Caco-2 (cell line): ENCODE measurements at regions of chr5 and their contacts with region 1.

Region 1: GRCh38 chr5:128905571-128906110 is 59.6 kb upstream of the SLC27A6 start:
- DNase-seq: peak in 1 of 2 experiments; percentile 62
- H3K4me3 ChIP-seq: no peak overlapping the region
- H3K4me3 Mint-ChIP-seq: no peak overlapping the region
- H3K27ac Mint-ChIP-seq: no peak overlapping the region
- H3K4me1 ChIP-seq: no peaks in the 10 kb centered on the region
- H3K4me1 Mint-ChIP-seq: no peaks in the 10 kb centered on the region
- H3K27me3 ChIP-seq: no peaks in the 10 kb centered on the region
- H3K27me3 Mint-ChIP-seq: no peaks in the 10 kb centered on the region
- CTCF ChIP-seq: peak; percentile 64 to 77

Region 2: GRCh38 chr5:128881502-128882008 is 24.1 kb before region 1 on chr5:
- CTCF ChIA-PET with region 1: no interaction called
- POLR2A ChIA-PET with region 1: no interaction called
- intact Hi-C with region 1: no loop called
- DNase-seq: no peak
- H3K4me3 ChIP-seq: no peak overlapping the region
- H3K4me3 Mint-ChIP-seq: no peak overlapping the region
- H3K27ac Mint-ChIP-seq: no peak overlapping the region
- H3K4me1 ChIP-seq: no peaks in the 10 kb centered on the region
- H3K4me1 Mint-ChIP-seq: no peaks in the 10 kb centered on the region
- H3K27me3 ChIP-seq: no peaks in the 10 kb centered on the region
- H3K27me3 Mint-ChIP-seq: peaks cover 16% of the 10 kb centered on the region
- CTCF ChIP-seq: no peak

Region 3: DNA sequence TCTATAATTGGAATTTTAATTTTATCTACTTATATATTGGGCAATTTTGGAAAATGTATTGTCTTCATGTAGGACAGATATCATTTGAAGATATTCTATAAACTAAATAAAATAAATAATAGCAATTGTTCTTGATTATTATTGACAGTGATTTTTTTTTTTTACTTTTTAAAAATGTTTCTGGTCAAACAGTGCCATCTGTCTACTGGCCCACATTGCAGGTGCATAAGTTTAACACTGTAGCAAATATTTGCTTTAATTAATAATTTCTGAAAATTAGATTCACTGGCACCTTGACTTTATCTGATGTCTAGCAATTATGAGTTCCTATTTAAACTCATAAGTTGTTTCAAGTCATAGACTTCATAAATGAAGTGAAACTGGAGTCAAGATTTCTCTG is 147.8 kb after region 1 on chr5:
- CTCF ChIA-PET with region 1: no interaction called
- POLR2A ChIA-PET with region 1: no interaction called
- intact Hi-C with region 1: loop called (anchors 5 kb)
- DNase-seq: no peak
- H3K4me3 ChIP-seq: no peak overlapping the region
- H3K4me3 Mint-ChIP-seq: no peak overlapping the region
- H3K27ac Mint-ChIP-seq: no peak overlapping the region
- H3K4me1 ChIP-seq: 0 out of 2 replicates have a peak, but pooled peaks cover 3% of the 10 kb centered on the region
- H3K4me1 Mint-ChIP-seq: peaks cover 9% of the 10 kb centered on the region
- H3K27me3 ChIP-seq: no peaks in the 10 kb centered on the region; the same call in 1 of the 2 replicates
- H3K27me3 Mint-ChIP-seq: no peaks in the 10 kb centered on the region
- CTCF ChIP-seq: no peak

Region 4: DNA sequence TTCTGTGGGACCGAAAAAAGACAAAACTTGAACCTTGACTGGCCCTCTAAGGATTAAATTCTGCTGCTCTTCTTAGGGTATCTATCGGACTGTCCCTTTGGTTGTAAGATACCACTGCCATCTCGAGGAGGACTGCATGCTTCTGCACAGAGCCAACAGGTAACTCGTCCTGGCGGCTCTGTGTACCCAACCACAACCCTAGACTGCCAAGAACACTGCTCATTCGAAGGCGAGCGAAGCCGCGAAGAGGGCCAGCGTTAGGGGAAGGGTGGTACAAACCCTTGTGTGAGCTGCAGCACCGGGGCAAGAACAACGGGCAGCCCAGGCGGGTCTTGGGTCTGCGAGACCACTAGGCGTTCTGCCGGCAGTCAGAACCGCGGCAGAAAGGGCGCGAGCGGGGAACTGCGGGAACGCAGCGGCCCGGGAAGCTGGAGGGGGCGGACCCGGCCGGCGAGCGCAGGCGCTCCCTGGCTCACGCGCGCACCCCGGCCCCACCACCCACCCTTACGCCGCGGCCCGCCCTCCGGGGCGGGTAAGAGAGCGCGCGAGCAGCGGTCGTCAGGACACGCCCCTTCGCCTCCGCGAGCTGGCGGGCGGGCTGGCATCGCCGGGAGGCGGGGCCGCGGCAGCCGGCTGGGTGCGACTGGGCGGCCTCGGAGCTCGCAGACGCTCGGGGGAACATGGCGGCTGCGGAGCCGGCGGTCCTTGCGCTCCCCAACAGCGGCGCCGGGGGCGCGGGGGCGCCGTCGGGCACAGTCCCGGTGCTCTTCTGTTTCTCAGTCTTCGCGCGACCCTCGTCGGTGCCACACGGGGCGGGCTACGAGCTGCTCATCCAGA is 188.7 kb after region 1 on chr5 and contains the start of gene ISOC1:
- CTCF ChIA-PET with region 1: interaction called, 9 read pairs
- POLR2A ChIA-PET with region 1: no interaction called
- intact Hi-C with region 1: loop called (anchors 1 kb)
- DNase-seq: peak; percentile 90 to 95
- H3K4me3 ChIP-seq: peak within 1 kb of the TSS; percentile 100
- H3K4me3 Mint-ChIP-seq: peak within 1 kb of the TSS; percentile 78
- H3K27ac Mint-ChIP-seq: peak within 1 kb of the TSS; percentile 27
- H3K4me1 ChIP-seq: no peaks in the 10 kb centered on the region
- H3K4me1 Mint-ChIP-seq: no peaks in the 10 kb centered on the region
- H3K27me3 ChIP-seq: no peaks in the 10 kb centered on the region
- H3K27me3 Mint-ChIP-seq: peaks cover 11% of the 10 kb centered on the region
- CTCF ChIP-seq: peak in 1 of 2 experiments; percentile 14
- total RNA-seq, gene ISOC1: 29.8 and 33.3 TPM in 2 replicates

Region 5: GRCh38 chr5:129125810-129126209 is 220.2 kb after region 1 on chr5:
- CTCF ChIA-PET with region 1: interaction called, 5 read pairs
- POLR2A ChIA-PET with region 1: no interaction called
- intact Hi-C with region 1: loop called (anchors 1 kb)
- DNase-seq: no peak
- H3K4me3 ChIP-seq: no peak overlapping the region
- H3K4me3 Mint-ChIP-seq: no peak overlapping the region
- H3K27ac Mint-ChIP-seq: no peak overlapping the region
- H3K4me1 ChIP-seq: no peaks in the 10 kb centered on the region
- H3K4me1 Mint-ChIP-seq: no peaks in the 10 kb centered on the region
- H3K27me3 ChIP-seq: no peaks in the 10 kb centered on the region
- H3K27me3 Mint-ChIP-seq: no peaks in the 10 kb centered on the region
- CTCF ChIP-seq: no peak

Region 6: GRCh38 chr5:129135633-129136032 is 230.0 kb after region 1 on chr5:
- CTCF ChIA-PET with region 1: no interaction called
- POLR2A ChIA-PET with region 1: no interaction called
- intact Hi-C with region 1: loop called (anchors 1 kb)
- DNase-seq: peak; percentile 42 to 46
- H3K4me3 ChIP-seq: no peak overlapping the region
- H3K4me3 Mint-ChIP-seq: no peak overlapping the region
- H3K27ac Mint-ChIP-seq: no peak overlapping the region
- H3K4me1 ChIP-seq: no peaks in the 10 kb centered on the region
- H3K4me1 Mint-ChIP-seq: no peaks in the 10 kb centered on the region
- H3K27me3 ChIP-seq: no peaks in the 10 kb centered on the region
- H3K27me3 Mint-ChIP-seq: no peaks in the 10 kb centered on the region
- CTCF ChIP-seq: peak; percentile 32 to 44